Lower leg skin (tissue), 4 donors: ENCODE measurements at regions of chr7 and their contacts with region 1.

Region 1: DNA sequence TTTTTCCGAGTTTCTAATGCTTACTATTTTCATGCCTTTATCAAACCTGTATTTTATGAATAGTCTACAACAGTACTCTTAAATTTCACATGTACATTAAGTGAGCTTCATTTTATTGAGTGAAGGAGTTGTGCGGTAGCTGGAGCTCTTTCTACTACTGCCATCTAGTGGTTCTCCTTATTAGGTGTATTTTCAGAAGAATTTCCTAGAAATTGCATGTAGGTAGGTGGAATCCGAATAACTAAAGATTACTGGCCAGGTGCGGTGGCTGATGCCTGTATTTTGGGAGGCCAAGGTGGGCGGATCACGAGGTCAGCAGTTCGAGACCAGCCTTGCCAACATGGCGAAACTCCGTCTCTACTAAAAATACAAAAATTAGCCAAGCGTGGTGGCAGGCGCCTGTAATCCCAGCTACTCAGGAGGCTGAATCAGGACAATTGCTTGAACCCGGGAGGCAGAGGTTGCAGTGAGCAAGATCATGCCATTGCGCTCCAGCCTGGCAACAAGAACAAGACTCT is 38.3 kb downstream of the LRRC72 start:
- DNase-seq: no peak
- H3K4me3 ChIP-seq: no peak overlapping the region
- CTCF ChIP-seq: no peak
- POLR2A ChIP-seq: no peak

Region 2: GRCh38 chr7:16078076-16078952 is 486.7 kb before region 1 on chr7:
- intact Hi-C with region 1: loop called (anchors 5 kb)
- DNase-seq: no peak
- H3K4me3 ChIP-seq: no peak overlapping the region
- CTCF ChIP-seq: no peak
- POLR2A ChIP-seq: no peak

Region 3: DNA sequence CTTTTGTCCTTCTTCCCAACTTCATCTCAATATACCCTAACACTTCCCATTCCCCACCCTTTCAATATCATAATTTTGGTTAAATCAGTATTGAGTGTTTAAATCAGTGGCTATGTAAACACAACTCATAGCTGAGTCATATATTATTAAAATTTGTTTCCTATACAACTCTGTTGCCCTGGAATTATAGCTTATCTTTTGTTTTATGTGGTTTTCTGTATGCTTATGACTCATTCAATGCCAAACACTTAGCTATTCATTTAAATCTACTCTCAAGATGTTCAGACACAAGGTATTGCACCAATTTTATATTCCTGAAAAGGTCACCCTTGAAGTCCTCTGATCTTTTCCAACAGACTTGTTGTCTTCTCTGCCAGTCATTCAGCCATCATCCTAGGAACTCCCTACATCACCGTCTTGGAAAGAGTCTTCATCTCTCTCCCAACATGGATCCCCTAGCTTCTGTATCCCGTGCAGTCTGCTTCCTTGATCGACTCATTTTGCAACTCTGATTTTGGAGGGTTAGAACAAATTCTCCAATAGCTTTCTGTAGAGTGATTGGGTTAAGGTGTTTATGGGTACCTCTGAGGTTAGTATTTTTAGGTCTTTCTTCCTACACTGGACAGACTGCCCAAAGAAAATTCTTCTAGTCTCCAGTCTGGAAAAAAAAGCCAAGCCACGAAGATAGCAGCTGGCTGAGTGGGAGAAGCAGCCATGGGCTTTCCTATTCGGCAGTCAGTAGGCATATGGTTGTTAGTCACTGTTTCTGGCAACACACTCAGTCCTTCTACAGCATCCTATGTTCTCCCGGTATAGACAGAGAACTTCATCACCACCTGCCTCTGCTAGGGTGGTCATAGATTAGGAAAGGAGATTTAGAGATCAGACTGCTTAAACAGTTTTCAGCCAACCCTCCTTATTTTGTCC is 245.7 kb before region 1 on chr7:
- intact Hi-C with region 1: no loop called
- DNase-seq: no peak
- H3K4me3 ChIP-seq: no peak overlapping the region
- CTCF ChIP-seq: no peak
- POLR2A ChIP-seq: no peak

Region 4: GRCh38 chr7:16431646-16432424 is 133.1 kb before region 1 on chr7:
- intact Hi-C with region 1: loop called (anchors 10 kb)
- DNase-seq: peak in 1 of 2 donors; percentile 20
- H3K4me3 ChIP-seq: no peak overlapping the region
- CTCF ChIP-seq: no peak
- POLR2A ChIP-seq: no peak